Activated CD4-positive, alpha-beta T cell treated with anti-CD3 and anti-CD28 coated beads for 36 hours (primary cell): ENCODE measurements at regions of chr5 and their contacts with region 1.

Region 1: DNA sequence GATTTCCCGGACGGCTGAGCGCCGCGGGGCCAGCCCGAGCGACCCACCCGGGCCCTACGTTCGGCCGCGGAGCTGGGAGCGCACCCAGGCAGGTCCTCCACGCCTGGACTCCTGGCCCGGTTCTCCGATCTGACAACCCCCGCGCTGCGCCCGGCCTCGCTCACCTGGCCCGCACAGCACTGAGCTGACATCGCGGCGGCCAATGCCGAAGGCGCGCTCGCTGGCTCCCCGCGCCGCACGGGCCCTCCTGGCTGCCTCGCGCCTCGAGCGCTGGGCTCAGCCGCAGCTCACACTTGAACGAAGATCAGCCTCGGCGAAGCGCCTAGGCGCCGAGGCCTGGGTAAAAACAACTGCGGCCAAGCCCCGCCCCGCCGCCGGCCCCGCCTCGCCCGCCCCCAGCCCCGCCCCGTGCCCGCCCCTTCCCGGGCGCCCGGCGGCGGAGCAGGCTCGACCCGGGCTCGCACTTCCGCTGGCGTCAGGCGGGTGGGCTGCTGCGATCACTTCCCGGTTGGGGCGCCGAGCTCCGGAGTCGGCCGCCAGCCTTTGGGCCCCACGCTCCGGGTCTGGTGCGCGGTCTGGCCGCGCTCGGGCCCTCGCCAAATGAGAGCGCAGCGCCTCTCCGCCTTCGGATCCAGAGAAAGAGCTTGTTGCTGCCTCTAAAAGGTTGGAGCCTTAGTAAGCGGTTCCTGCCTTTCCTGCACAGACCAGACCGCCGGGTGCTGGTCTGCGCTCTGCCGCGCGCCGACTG is at the start of gene SERINC5:
- DNase-seq: peak; percentile 92
- ATAC-seq: peak; percentile 75
- H3K4me3 Mint-ChIP-seq: peak within 1 kb of the TSS; percentile 93
- H3K27ac Mint-ChIP-seq: peak within 1 kb of the TSS; percentile 97
- H3K4me1 Mint-ChIP-seq: peaks cover 42% of the 10 kb centered on the region
- H3K27me3 Mint-ChIP-seq: no peaks in the 10 kb centered on the region
- total RNA-seq, gene SERINC5: 28.1 to 36.0 TPM

Region 2: DNA sequence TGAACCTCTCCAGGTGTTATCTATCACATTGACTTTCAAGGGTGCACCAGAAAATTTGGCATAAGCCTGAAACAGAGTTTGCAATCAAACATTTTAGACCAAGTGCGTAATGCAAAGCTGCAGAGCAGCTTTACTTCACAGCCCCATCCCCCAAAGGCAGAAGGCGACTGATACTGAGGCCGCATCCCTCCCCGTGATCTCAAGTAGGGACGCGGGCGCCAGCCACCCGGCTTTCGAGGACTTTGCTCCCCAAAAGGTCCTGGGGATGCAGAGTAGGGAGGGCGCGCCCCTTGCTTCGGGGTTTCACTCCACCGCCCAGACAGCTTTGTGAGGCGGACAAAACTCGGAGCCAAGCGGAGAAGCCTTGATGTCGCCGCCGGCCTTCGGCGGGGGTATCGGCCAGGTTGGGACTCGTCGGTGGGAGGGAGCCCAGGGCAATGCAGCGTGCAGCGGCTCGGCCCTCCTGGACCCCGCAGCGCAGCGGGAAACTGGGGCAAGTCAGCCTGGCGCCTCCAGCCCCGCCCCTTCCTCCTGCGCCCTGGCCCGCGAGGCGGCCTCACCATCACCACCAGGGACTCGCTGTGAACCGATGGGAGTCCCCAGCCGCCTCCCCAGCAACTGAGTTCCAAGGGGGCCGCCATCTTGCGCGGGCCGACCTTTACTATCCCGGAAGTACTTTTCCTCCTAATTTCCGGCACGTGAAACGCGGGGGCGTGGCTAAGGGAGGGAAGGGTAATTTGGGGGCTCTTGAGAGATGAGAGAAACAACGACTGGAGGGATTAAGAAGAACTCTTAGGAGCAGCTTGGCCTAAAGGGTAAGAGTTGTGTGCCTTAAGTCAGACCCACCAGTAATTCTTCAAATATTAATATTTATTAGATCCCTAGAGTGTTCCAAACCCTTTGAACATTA is 265.1 kb before region 1 on chr5 and contains the start of gene MTX3:
- CTCF ChIA-PET with region 1: no interaction called
- POLR2A ChIA-PET with region 1: no interaction called
- intact Hi-C with region 1: loop called (anchors 1 to 10 kb)
- DNase-seq: peak; percentile 94
- ATAC-seq: peak; percentile 84
- H3K4me3 Mint-ChIP-seq: peak within 1 kb of the TSS; percentile 89
- H3K27ac Mint-ChIP-seq: peak within 1 kb of the TSS; percentile 98
- H3K4me1 Mint-ChIP-seq: peaks cover 49% of the 10 kb centered on the region
- H3K27me3 Mint-ChIP-seq: peaks cover 2% of the 10 kb centered on the region
- total RNA-seq, gene MTX3: 11.9 to 14.3 TPM

Region 3: DNA sequence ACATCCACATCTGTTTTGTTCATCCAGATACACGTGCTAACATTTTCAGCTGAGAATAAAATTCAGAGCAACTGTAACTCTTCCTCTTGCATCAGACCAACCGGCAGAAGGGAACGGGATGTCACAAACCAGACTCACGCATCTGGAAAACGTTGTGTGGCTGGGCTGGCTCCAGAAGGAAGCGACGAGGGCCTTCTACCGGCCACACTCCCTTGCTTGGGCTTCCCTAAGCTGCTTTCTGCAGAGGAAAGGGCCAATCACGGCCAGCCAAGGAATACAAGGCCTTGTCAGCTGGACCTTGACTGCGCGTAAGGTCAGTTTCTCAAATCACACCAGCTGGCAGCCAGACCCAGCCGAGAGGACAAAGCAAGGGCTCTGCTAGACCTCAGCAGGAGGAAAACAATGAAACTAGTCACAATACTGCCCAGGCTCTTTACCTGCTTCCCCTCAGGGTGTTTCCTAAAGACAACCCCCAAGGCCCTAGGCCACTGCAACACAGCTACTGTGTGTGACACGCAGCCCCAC is 114.7 kb before region 1 on chr5:
- CTCF ChIA-PET with region 1: interaction called, 6 read pairs
- POLR2A ChIA-PET with region 1: interaction called, 5 read pairs
- intact Hi-C with region 1: loop called in 1 of 2 experiments (anchors 2 kb)
- DNase-seq: no peak
- ATAC-seq: no peak
- H3K4me3 Mint-ChIP-seq: peak overlapping the region; percentile 12
- H3K27ac Mint-ChIP-seq: peak overlapping the region; percentile 94
- H3K4me1 Mint-ChIP-seq: peaks cover 80% of the 10 kb centered on the region
- H3K27me3 Mint-ChIP-seq: no peaks in the 10 kb centered on the region

Region 4: DNA sequence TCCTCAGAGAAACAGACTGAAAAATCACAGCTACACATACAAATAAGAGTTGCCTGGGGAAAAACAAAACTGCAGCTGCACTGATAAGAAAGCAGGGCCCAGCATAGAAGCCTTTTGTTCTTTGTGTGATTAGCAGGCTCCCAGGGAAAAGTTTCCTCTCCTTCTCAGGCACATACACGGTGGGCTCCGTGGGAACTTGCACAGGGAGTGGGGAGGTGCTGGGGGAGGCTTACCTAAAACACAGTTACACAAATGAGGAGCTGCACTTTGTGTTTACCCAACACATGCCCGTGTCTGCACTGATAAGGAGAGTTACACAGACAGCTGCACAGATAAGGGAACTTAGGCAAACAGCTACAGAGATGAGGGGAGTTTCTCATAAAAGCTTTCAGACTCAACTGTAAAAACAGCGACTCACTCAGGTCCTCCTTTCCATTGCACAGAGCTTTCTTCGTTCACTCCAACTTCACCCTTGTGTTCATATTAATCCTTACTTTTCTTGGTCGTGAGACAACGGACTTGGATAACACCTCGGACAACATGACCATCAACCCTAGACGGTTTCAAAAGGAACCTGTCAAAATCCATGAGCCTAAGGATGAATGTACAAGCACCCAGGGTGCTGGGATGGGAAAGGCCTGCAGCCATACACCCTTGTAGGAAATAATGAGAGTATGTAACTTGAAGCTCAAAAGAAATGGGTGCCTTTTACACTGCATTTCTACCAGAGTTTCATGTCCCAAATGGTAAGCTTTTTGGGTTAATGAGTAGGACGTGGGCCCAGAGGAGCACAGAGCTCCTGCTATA is 50.9 kb before region 1 on chr5:
- CTCF ChIA-PET with region 1: interaction called, 4 read pairs
- POLR2A ChIA-PET with region 1: interaction called, 8 read pairs
- intact Hi-C with region 1: loop called in 1 of 2 experiments (anchors 2 kb)
- DNase-seq: no peak
- ATAC-seq: peak; percentile 66
- H3K4me3 Mint-ChIP-seq: peak overlapping the region; percentile 7
- H3K27ac Mint-ChIP-seq: peak overlapping the region; percentile 88
- H3K4me1 Mint-ChIP-seq: peaks cover 74% of the 10 kb centered on the region
- H3K27me3 Mint-ChIP-seq: no peaks in the 10 kb centered on the region

Region 5: DNA sequence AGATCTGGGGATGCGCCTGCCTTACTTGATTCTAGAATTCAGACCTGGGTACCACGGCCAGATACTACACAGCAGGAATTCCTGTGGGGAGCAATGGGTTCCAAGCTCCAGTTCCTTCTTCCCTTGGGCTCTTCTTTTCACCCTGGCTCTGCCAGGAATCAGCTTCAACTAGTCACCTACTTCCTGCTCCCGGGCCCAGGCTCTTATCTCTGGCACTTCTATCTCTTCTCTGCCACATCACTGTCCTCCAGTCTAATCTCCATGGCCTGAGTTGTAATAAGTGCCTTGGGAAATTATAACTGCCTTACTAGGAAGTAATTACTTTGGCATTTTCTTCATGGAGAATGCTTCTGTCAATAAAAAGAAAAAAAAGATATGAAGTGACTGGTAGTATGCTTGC is 26.1 kb after region 1 on chr5:
- CTCF ChIA-PET with region 1: interaction called, 3 read pairs
- POLR2A ChIA-PET with region 1: interaction called, 3 read pairs
- intact Hi-C with region 1: loop called in 1 of 2 experiments (anchors 2 kb)
- DNase-seq: no peak
- ATAC-seq: no peak
- H3K4me3 Mint-ChIP-seq: no peak overlapping the region
- H3K27ac Mint-ChIP-seq: no peak overlapping the region
- H3K4me1 Mint-ChIP-seq: peaks cover 18% of the 10 kb centered on the region
- H3K27me3 Mint-ChIP-seq: no peaks in the 10 kb centered on the region

Region 6: GRCh38 chr5:80629281-80629680 is 373.4 kb after region 1 on chr5:
- CTCF ChIA-PET with region 1: no interaction called
- POLR2A ChIA-PET with region 1: no interaction called
- intact Hi-C with region 1: no loop called
- DNase-seq: no peak
- ATAC-seq: no peak
- H3K4me3 Mint-ChIP-seq: no peak overlapping the region
- H3K27ac Mint-ChIP-seq: no peak overlapping the region
- H3K4me1 Mint-ChIP-seq: peaks cover 2% of the 10 kb centered on the region
- H3K27me3 Mint-ChIP-seq: no peaks in the 10 kb centered on the region

Region 7: DNA sequence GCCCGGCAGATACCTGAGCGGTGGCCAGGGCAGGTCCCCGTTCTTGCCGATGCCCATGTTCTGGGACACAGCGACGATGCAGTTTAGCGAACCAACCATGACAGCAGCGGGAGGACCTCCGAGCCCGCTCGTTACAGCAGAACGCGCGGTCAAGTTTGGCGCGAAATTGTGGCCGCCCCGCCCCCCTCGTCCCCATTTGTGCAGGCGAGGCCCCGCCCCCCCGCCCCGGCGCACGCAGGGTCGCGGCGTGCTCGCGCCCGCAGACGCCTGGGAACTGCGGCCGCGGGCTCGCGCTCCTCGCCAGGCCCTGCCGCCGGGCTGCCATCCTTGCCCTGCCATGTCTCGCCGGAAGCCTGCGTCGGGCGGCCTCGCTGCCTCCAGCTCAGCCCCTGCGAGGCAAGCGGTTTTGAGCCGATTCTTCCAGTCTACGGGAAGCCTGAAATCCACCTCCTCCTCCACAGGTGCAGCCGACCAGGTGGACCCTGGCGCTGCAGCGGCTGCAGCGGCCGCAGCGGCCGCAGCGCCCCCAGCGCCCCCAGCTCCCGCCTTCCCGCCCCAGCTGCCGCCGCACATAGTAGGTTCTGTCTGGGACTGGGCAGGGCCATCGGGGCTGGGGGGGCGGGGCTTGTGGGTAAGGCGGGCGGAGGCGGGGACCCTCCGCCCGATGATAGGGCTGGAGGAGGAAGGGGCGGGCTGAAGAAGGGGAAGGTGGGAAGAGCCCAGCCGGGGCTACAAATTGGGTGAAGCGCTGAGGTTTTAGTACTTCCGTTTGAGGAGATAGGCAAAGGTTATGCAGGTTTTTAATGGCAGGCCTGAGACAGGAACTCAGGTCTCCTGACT is 398.7 kb after region 1 on chr5 and contains the starts of genes DHFR and MSH3:
- CTCF ChIA-PET with region 1: no interaction called
- POLR2A ChIA-PET with region 1: no interaction called
- intact Hi-C with region 1: loop called in 1 of 2 experiments (anchors 1 kb)
- DNase-seq: peak; percentile 95
- ATAC-seq: peak; percentile 69
- H3K4me3 Mint-ChIP-seq: peak within 1 kb of the TSS; percentile 94
- H3K27ac Mint-ChIP-seq: peak within 1 kb of the TSS; percentile 99
- H3K4me1 Mint-ChIP-seq: peaks cover 21% of the 10 kb centered on the region
- H3K27me3 Mint-ChIP-seq: no peaks in the 10 kb centered on the region
- total RNA-seq, gene DHFR: 105 to 107 TPM
- total RNA-seq, gene MSH3: 25.6 to 27.1 TPM